Calu3 (cell line): ENCODE measurements at regions of chr12 and their contacts with region 1.

Region 1: GRCh38 chr12:19066475-19067001 is 63.0 kb upstream of the PLEKHA5 start:
- DNase-seq: peak; percentile 48
- H3K4me3 Mint-ChIP-seq: peak overlapping the region; percentile 60
- H3K27ac Mint-ChIP-seq: peak overlapping the region; percentile 93
- H3K4me1 Mint-ChIP-seq: peaks cover 36% of the 10 kb centered on the region
- H3K27me3 Mint-ChIP-seq: no peaks in the 10 kb centered on the region
- CTCF ChIP-seq: no peak

Region 2: GRCh38 chr12:19018302-19018970 is 48.1 kb before region 1 on chr12:
- CTCF ChIA-PET with region 1: no interaction called
- intact Hi-C with region 1: loop called (anchors 5 kb)
- DNase-seq: peak; percentile 12
- H3K4me3 Mint-ChIP-seq: no peak overlapping the region
- H3K27ac Mint-ChIP-seq: peak overlapping the region; percentile 74
- H3K4me1 Mint-ChIP-seq: peaks cover 41% of the 10 kb centered on the region
- H3K27me3 Mint-ChIP-seq: no peaks in the 10 kb centered on the region
- CTCF ChIP-seq: no peak

Region 3: DNA sequence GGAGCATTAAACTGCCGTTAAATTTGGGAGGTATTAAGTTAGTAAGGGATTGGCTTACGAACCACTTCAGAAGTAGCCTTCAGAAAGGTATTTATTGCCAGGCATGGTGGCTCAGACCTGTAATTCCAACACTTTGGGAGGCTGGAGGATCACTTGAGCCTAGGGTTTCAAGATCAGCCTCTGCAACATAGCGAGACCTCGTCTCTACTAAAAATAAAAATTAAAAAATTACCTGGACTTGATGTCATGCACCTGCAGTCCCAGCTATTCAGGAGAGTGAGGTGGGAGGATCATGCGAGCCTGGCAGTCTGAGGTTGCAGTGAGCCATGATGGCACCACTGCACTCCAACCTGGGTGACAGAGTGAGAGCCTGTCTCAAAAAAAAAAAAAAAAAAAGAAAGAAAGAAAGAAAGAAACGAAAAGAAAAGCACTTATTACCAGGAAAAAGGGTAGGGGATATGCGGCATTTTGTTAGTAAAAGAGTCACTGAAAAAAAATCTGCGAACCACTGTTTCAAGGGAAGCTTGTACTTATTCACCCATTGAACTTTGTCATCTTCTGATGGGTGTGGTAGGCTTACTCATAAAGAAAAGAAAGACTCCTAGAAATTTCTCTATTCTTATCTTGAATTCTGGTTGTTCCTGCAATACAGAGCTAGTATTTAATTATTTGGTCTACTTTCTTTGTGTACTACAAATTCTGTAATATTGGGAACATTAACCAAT is 29.4 kb after region 1 on chr12:
- CTCF ChIA-PET with region 1: interaction called, 25 read pairs
- intact Hi-C with region 1: loop called (anchors 1 kb)
- DNase-seq: peak; percentile 6
- H3K4me3 Mint-ChIP-seq: no peak overlapping the region
- H3K27ac Mint-ChIP-seq: peak overlapping the region; percentile 55
- H3K4me1 Mint-ChIP-seq: peaks cover 17% of the 10 kb centered on the region
- H3K27me3 Mint-ChIP-seq: no peaks in the 10 kb centered on the region
- CTCF ChIP-seq: no peak